CD4-positive, alpha-beta T cell (primary cell): ENCODE measurements at regions of chr6 and their contacts with region 1.

Region 1: GRCh38 chr6:127748290-127748689 is 152.6 kb downstream of the THEMIS start:
- DNase-seq: no peak
- ATAC-seq: peak; percentile 24
- H3K4me3 ChIP-seq: no peak overlapping the region
- H3K4me3 Mint-ChIP-seq: peak overlapping the region; percentile 7
- H3K27ac ChIP-seq: no peak overlapping the region
- H3K27ac Mint-ChIP-seq: peak overlapping the region; percentile 75
- H3K4me1 ChIP-seq: no peaks in the 10 kb centered on the region
- H3K4me1 Mint-ChIP-seq: peaks cover 78% of the 10 kb centered on the region
- H3K27me3 ChIP-seq: no peaks in the 10 kb centered on the region
- H3K27me3 Mint-ChIP-seq: no peaks in the 10 kb centered on the region
- CTCF ChIP-seq: no peak

Region 2: DNA sequence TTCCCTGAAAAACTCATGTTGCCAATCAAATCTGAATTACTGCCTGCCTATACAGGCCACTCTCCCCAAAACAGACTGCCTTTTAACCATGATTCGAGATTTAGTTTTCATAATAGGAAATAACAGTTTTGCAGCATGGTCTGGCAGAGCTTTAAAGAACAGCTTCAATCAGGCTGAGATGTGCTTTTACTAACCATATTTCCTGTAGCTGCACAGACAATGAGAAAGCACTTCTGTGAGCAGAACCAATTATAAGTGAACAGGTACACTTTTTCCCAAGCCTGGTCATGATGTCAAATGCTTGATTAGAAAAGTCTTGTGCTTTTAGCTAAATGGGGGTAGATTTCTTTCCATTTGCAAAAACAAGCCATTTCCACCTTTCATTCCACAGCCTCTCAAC is 44.3 kb after region 1 on chr6:
- CTCF ChIA-PET with region 1: no interaction called
- POLR2A ChIA-PET with region 1: interaction called, 3 read pairs
- intact Hi-C with region 1: loop called in 1 of 2 experiments (anchors 5 kb)
- DNase-seq: peak in 3 of 14 experiments; percentile 36 to 41 (median 39)
- ATAC-seq: peak; percentile 84
- H3K4me3 ChIP-seq: no peak overlapping the region
- H3K4me3 Mint-ChIP-seq: peak overlapping the region; percentile 46
- H3K27ac ChIP-seq: peak overlapping the region in 1 of 2 donors; percentile 14
- H3K27ac Mint-ChIP-seq: peak overlapping the region; percentile 80
- H3K4me1 ChIP-seq: peaks cover 32% of the 10 kb centered on the region
- H3K4me1 Mint-ChIP-seq: peaks cover 94% of the 10 kb centered on the region
- H3K27me3 ChIP-seq: no peaks in the 10 kb centered on the region
- H3K27me3 Mint-ChIP-seq: no peaks in the 10 kb centered on the region
- CTCF ChIP-seq: no peak

Region 3: DNA sequence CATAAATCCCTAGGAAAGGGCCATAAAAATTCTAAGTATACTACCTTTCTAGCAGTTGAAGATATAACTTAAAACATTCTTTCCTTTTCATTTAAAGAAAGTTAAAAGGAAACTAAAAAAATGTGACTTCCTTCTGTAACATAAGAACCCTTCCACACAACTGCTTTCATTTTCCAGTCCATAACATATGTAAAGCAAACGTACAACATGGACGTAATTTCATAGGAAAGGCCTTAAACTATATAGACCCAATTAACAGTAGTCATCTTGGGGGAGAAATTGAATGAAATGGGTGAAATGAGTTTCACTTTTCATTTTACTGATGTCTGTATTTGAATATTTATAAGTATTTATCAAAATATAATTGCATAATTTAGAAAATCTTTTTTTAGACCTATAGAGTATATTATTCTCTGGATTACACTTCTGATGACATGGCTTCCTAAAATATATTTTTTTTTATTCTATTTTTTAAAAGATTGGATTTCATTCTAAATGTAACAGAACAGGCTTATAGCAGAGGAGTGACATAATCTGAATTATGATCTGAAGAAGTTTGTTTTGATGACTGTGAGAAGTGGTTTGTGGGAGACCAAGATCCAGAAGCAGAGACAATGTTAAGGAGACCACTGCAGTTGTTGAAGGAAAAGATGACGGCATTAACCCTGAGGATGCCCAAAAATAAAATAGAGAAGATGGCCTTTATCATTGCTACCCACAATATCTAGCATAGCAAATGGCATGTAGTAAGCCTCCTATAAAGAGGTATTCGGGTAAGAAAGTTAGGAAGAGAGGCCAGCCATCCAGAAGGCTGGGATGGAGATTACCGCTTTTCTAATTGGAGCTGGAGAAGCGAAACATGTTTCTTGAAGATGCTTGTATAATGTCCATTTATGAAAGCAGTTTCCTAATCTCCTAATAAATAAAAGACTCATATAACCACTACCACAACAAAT is 511.7 kb after region 1 on chr6:
- CTCF ChIA-PET with region 1: no interaction called
- POLR2A ChIA-PET with region 1: no interaction called
- intact Hi-C with region 1: loop called in 1 of 2 experiments (anchors 10 kb)
- DNase-seq: peak in 3 of 14 experiments; percentile 39 to 62 (median 43)
- ATAC-seq: peak; percentile 75
- H3K4me3 ChIP-seq: peak overlapping the region; percentile 35
- H3K4me3 Mint-ChIP-seq: peak overlapping the region; percentile 85
- H3K27ac ChIP-seq: peak overlapping the region in 1 of 2 donors; percentile 3
- H3K27ac Mint-ChIP-seq: peak overlapping the region; percentile 76
- H3K4me1 ChIP-seq: peaks cover 11% of the 10 kb centered on the region
- H3K4me1 Mint-ChIP-seq: peaks cover 30% of the 10 kb centered on the region
- H3K27me3 ChIP-seq: no peaks in the 10 kb centered on the region
- H3K27me3 Mint-ChIP-seq: no peaks in the 10 kb centered on the region
- CTCF ChIP-seq: no peak